K562 (cell line): ENCODE measurements at regions of chr10 and their contacts with region 1.

Region 1: DNA sequence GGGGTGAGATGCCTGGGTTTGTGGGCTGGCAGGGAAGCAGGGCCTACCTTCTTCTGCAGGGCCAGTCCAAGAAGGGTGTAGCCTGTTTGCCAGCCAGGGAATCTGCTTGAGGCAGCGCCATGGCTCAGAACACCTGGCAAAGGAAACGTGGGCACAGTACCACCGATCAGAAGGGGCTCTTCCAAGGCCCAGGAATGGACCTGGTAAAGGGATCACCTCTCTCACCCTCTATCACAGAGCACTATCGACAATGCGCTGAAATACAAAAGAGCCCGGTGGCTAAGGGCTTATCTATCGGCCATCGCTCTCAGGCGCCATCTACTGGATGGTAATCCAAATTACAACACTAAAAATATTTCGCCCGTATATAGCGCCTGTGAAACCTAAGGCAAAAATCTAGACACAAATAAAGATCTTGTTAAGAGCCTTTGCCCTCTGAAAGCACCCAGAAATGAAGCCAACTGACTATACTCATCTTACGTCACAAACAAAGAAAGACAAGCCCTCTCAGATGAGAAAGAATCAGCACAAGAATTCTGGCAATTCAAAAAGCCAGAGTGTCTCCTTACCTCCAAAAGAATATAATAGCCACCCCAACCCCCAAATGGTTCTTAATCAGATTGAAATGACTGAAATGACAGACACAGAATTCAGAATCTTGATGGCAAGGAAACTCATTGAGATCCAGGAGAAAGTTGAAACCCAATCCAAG is 217.8 kb upstream of the HPS1 start:
- DNase-seq: peak; percentile 50 to 58 (median 54)
- ATAC-seq: peak; percentile 74
- H3K4me3 ChIP-seq: no peak overlapping the region
- H3K27ac ChIP-seq: no peak overlapping the region
- H3K4me1 ChIP-seq: no peaks in the 10 kb centered on the region
- H3K27me3 ChIP-seq: no peaks in the 10 kb centered on the region
- CTCF ChIP-seq: peak; percentile 68 to 72 (median 69)
- EP300 ChIP-seq: no peak
- POLR2A ChIP-seq: no peak
- RAD21 ChIP-seq: peak; percentile 42 to 75

Region 2: DNA sequence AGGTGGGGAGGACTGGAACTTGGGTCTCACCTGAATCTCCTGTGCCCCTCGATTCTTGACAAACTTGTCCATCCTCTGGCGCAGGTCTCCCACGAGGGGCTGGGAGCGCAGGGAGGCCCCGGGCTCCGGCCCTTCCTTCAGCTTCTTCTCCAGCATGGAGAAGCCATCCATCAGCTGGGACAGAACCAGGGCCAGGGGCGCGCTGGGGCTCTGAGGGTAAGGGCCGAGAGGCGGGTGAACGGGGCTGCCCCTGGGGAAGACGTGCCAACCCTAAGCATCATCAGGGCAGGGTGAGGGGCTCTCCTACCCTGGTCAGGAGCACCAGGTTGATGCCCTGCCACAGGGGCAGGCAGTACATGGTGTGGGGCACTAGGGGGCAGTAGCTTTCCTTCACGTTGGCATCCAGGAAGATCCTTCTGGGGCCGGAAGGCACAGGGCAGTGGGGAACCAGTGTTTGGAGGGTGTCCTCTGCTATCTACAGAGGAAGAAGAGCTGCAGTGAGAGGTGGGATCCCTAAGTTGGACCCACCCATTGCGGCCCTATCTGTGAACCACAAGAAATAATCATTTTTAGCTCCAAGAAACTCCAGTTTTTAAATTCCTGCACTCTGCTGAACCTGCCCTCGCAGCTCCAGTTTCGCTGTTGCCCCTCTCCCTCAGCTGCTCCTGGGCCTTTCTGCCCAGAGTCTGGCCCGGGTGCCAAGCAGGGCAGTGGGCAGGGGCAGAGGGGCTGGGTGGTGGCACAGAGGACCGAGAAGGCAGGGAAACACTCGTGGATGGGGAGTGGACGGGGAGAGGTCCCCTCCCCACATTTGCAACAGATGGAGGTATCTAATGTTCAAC is 238.8 kb before region 1 on chr10:
- CTCF ChIA-PET with region 1: no interaction called
- POLR2A ChIA-PET with region 1: no interaction called
- in situ Hi-C with region 1: loop called (anchors 10 kb)
- intact Hi-C with region 1: loop called (anchors 5 kb)
- DNase-seq: peak; percentile 45 to 62 (median 58)
- ATAC-seq: peak; percentile 93
- H3K4me3 ChIP-seq: no peak overlapping the region
- H3K27ac ChIP-seq: no peak overlapping the region
- H3K4me1 ChIP-seq: peaks cover 0 to 9% of the 10 kb centered on the region in 2 experiments; a peak in 1 of 5 replicates
- H3K27me3 ChIP-seq: no peaks in the 10 kb centered on the region
- CTCF ChIP-seq: peak; percentile 64 to 79 (median 67)
- EP300 ChIP-seq: no peak
- POLR2A ChIP-seq: no peak
- RAD21 ChIP-seq: peak; percentile 45 to 64

Region 3: GRCh38 chr10:98474628-98475027 is 189.9 kb before region 1 on chr10:
- CTCF ChIA-PET with region 1: no interaction called
- POLR2A ChIA-PET with region 1: no interaction called
- in situ Hi-C with region 1: no loop called
- intact Hi-C with region 1: no loop called
- DNase-seq: no peak
- ATAC-seq: no peak
- H3K4me3 ChIP-seq: no peak overlapping the region
- H3K27ac ChIP-seq: no peak overlapping the region
- H3K4me1 ChIP-seq: no peaks in the 10 kb centered on the region
- H3K27me3 ChIP-seq: 0 out of 5 replicates have a peak, but pooled peaks cover 0 to 3% of the 10 kb centered on the region in 2 experiments
- CTCF ChIP-seq: no peak
- EP300 ChIP-seq: no peak
- POLR2A ChIP-seq: no peak
- RAD21 ChIP-seq: no peak

Region 4: GRCh38 chr10:98684019-98684899 is 19.8 kb after region 1 on chr10:
- CTCF ChIA-PET with region 1: no interaction called
- POLR2A ChIA-PET with region 1: no interaction called
- in situ Hi-C with region 1: no loop called
- intact Hi-C with region 1: no loop called
- DNase-seq: no peak
- ATAC-seq: no peak
- H3K4me3 ChIP-seq: no peak overlapping the region
- H3K27ac ChIP-seq: no peak overlapping the region
- H3K4me1 ChIP-seq: no peaks in the 10 kb centered on the region
- H3K27me3 ChIP-seq: no peaks in the 10 kb centered on the region
- CTCF ChIP-seq: no peak
- EP300 ChIP-seq: no peak
- POLR2A ChIP-seq: no peak
- RAD21 ChIP-seq: no peak

Region 5: GRCh38 chr10:99207340-99207739 is 542.9 kb after region 1 on chr10:
- CTCF ChIA-PET with region 1: no interaction called
- POLR2A ChIA-PET with region 1: no interaction called
- in situ Hi-C with region 1: no loop called
- intact Hi-C with region 1: no loop called
- DNase-seq: no peak
- ATAC-seq: no peak
- H3K4me3 ChIP-seq: no peak overlapping the region
- H3K27ac ChIP-seq: no peak overlapping the region
- H3K4me1 ChIP-seq: no peaks in the 10 kb centered on the region
- H3K27me3 ChIP-seq: no peaks in the 10 kb centered on the region
- CTCF ChIP-seq: no peak
- EP300 ChIP-seq: no peak
- POLR2A ChIP-seq: no peak
- RAD21 ChIP-seq: no peak